ENCODE measurements at regions of chr2 and their contacts with region 1.

Region 1: DNA sequence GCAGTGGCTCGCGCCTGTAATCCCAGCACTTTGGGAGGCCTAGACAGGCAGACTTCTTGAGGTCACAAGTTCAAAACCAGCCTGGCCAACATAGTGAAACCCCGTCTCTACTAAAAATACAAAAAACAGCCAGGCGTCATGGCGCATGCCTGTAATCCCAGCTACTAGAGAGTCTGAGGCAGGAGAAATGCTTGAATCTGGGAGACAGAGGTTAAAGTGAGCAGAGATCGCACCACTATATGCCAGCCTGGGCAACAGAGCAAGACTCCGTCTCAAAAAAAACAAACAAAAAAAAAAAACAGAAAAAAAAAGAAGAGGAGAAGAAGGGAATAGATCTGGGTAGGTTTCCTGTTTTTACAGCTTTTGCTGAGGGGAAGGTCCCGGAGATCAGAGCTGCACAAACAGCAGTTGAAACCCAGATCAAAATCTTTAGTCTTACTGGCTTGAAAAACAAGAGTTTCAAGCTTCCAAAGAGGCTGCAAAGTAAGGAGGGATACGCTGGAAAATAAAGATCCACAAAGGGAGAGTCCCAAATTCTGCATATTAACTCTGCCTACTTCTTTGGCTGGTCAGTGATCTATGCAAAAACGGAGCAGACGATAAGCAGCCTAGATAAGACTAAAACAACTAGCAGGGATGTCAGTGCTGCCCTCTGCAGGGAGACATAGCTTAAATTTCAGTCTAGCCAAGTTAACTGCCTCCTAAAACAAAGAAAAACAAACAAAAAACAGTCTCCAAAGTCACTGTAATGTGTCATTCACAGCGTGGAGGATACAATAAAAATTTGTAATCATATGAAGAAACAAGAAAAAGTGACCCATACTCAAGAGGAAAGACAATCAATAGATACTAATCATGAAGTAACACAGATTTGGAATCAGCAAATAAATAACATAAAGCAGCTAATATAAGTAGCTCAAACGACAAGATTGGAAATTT is 74.1 kb downstream of the TLK1 start:
- DNase-seq: peak; percentile 27 to 78 (median 57)
- ATAC-seq: peak; percentile 72
- H3K4me3 ChIP-seq: peak overlapping the region; percentile 4 to 39
- H3K4me3 Mint-ChIP-seq: peak overlapping the region; percentile 80
- H3K27ac ChIP-seq: peak overlapping the region; percentile 7 to 39
- H3K27ac Mint-ChIP-seq: peak overlapping the region; percentile 95
- H3K4me1 ChIP-seq: peaks cover 57% of the 10 kb centered on the region
- H3K4me1 Mint-ChIP-seq: peaks cover 66% of the 10 kb centered on the region
- H3K27me3 ChIP-seq: no peaks in the 10 kb centered on the region
- H3K27me3 Mint-ChIP-seq: no peaks in the 10 kb centered on the region
- CTCF ChIP-seq: peak; percentile 80

Region 2: DNA sequence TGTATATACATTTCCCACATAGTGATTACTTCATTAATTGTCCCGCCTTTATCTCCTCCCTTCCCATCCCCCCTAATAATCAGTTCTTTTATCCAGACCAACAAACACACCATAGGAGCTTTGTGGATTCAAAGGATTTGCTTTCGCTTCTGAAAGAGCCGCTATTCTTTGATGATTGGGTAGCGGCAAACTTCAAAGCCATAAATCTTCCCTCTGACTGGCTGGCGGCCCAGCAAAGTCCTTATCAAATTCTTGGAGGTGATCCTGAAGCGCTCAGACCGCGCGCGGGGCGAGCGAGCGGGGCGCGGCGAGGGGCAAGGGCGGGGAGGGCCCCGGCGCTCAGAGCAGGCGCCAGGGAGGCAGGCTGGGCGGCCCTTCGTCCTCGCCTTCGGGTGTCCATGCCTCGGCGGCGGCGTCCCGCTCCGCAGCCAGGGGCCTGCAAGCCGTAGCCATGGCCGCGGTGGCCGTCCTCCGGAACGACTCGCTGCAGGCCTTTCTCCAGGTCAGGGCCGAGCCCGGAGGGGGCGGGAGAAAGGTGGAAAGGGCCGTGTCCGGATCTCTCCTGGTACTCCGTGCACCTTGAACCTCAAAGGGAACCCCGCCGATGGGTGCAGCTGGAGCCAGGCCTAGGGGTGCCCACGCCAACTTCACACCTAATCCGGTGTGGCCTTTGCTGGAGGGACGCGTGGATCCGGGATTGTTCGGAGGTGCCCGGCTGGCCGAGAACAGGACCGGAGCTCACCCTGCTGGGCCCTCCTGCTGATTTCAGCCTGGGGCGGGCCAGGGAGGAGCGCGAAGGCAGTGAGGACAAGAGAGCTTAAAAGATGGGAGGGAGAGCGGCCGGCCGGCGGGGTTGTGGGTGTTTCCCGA is 371.3 kb before region 1 on chr2 and contains the start of gene SP5:
- CTCF ChIA-PET with region 1: no interaction called
- POLR2A ChIA-PET with region 1: no interaction called
- intact Hi-C with region 1: no loop called
- DNase-seq: peak in 5 of 9 experiments; percentile 19 to 62 (median 32)
- ATAC-seq: peak; percentile 46
- H3K4me3 ChIP-seq: peak within 1 kb of the TSS; percentile 44
- H3K4me3 Mint-ChIP-seq: peak within 1 kb of the TSS; percentile 90
- H3K27ac ChIP-seq: no peak within 1 kb of the TSS
- H3K27ac Mint-ChIP-seq: peak within 1 kb of the TSS; percentile 37
- H3K4me1 ChIP-seq: peaks cover 50% of the 10 kb centered on the region
- H3K4me1 Mint-ChIP-seq: peaks cover 43% of the 10 kb centered on the region
- H3K27me3 ChIP-seq: peaks cover 46 to 47% of the 10 kb centered on the region in 2 experiments
- H3K27me3 Mint-ChIP-seq: peaks cover 59% of the 10 kb centered on the region
- CTCF ChIP-seq: no peak
- total RNA-seq, gene SP5: not detected

Region 3: GRCh38 chr2:171042253-171042969 is 44.2 kb before region 1 on chr2:
- CTCF ChIA-PET with region 1: interaction called, 4 read pairs
- POLR2A ChIA-PET with region 1: no interaction called
- intact Hi-C with region 1: loop called in 1 of 2 experiments (anchors 5 kb)
- DNase-seq: peak in 1 of 9 experiments; percentile 24
- ATAC-seq: peak; percentile 36
- H3K4me3 ChIP-seq: peak overlapping the region in 1 of 2 experiments; percentile 14
- H3K4me3 Mint-ChIP-seq: peak overlapping the region; percentile 36
- H3K27ac ChIP-seq: peak overlapping the region; percentile 4 to 42
- H3K27ac Mint-ChIP-seq: peak overlapping the region; percentile 93
- H3K4me1 ChIP-seq: peaks cover 24% of the 10 kb centered on the region
- H3K4me1 Mint-ChIP-seq: peaks cover 32% of the 10 kb centered on the region
- H3K27me3 ChIP-seq: no peaks in the 10 kb centered on the region
- H3K27me3 Mint-ChIP-seq: no peaks in the 10 kb centered on the region
- CTCF ChIP-seq: no peak

Region 4: DNA sequence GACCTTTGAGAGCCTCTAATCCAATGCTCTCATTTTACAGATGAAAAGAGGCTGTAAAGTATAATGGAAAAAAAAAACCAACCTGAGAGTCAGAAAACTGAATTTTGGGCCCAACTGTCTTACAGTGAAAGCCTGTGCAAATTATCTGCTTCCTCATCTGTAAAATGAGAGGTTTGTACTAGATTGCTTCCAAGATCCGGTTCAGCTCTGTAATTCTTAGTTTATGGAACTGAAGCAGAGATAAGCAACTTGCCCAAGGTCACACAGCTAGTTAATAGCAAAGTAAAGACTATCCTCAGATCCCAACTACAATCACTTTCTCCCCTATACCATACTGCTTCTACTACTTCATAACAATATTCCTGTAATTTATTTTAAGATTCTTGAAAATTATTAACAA is 67.7 kb after region 1 on chr2:
- CTCF ChIA-PET with region 1: interaction called, 16 read pairs
- POLR2A ChIA-PET with region 1: interaction called, 19 read pairs
- intact Hi-C with region 1: loop called in 1 of 2 experiments (anchors 5 kb)
- DNase-seq: no peak
- ATAC-seq: no peak
- H3K4me3 ChIP-seq: no peak overlapping the region
- H3K4me3 Mint-ChIP-seq: no peak overlapping the region
- H3K27ac ChIP-seq: no peak overlapping the region
- H3K27ac Mint-ChIP-seq: no peak overlapping the region
- H3K4me1 ChIP-seq: peaks cover 50% of the 10 kb centered on the region
- H3K4me1 Mint-ChIP-seq: peaks cover 86% of the 10 kb centered on the region
- H3K27me3 ChIP-seq: no peaks in the 10 kb centered on the region
- H3K27me3 Mint-ChIP-seq: no peaks in the 10 kb centered on the region
- CTCF ChIP-seq: no peak

Region 5: GRCh38 chr2:171416009-171416926 is 329.6 kb after region 1 on chr2:
- CTCF ChIA-PET with region 1: interaction called, 5 read pairs
- POLR2A ChIA-PET with region 1: no interaction called
- intact Hi-C with region 1: loop called in 1 of 2 experiments (anchors 1 kb)
- DNase-seq: peak; percentile 44 to 85 (median 79)
- ATAC-seq: peak; percentile 98
- H3K4me3 ChIP-seq: no peak overlapping the region
- H3K4me3 Mint-ChIP-seq: no peak overlapping the region
- H3K27ac ChIP-seq: no peak overlapping the region
- H3K27ac Mint-ChIP-seq: peak overlapping the region; percentile 1
- H3K4me1 ChIP-seq: no peaks in the 10 kb centered on the region
- H3K4me1 Mint-ChIP-seq: peaks cover 10% of the 10 kb centered on the region
- H3K27me3 ChIP-seq: no peaks in the 10 kb centered on the region
- H3K27me3 Mint-ChIP-seq: no peaks in the 10 kb centered on the region
- CTCF ChIP-seq: peak; percentile 65

Measured in CD8-positive, alpha-beta T cell (primary cell).